ENCODE measurements at regions of chr15 and their contacts with region 1.

Region 1: DNA sequence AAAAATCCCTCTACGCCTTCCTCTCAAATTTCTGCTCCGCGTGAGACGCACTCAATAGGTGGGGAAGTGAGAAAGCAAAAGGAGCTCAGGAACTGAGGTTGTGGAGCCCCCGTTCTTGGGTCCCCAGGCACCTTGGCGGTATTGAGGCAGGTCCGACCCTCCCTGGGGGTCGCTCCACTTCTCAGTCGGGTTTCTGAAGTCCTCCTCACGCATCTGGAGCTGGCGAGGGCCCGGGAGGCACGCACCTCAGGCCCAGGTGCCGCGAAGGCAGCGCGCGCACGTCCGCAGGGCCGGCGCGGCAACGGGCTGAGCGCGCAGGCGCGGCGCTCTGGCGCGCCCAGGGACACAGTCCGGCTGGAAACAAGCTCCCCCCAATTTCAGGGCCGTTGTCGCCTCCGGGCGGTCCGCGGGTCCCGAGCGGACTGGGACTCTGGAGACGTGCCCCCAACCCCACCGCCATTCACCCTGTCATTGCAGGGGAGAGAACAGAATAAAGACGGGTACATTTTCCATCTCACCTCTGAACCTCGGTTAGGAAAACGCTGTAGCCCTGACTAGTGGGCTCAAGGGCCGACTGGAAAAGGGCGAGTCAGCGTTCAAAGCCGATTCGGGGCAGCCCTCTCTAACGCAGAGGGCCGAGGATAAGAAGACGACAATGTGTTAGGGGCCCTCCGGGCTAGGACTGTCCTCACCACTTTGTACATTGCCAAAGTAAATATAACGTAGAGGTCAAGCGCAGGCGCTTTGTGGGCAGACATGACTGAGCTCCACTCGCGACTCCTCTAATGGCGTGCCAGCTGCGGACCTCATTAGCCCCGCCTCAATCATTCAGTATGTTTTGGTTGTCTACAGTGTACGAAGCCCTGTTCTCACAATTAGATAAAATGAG is at the start of gene ZNF770:
- DNase-seq: peak; percentile 84
- H3K4me3 Mint-ChIP-seq: peak within 1 kb of the TSS; percentile 97
- H3K27ac Mint-ChIP-seq: peak within 1 kb of the TSS; percentile 99
- H3K4me1 Mint-ChIP-seq: peaks cover 28% of the 10 kb centered on the region
- H3K27me3 Mint-ChIP-seq: no peaks in the 10 kb centered on the region
- total RNA-seq, gene ZNF770: 36.4 to 39.4 TPM

Region 2: DNA sequence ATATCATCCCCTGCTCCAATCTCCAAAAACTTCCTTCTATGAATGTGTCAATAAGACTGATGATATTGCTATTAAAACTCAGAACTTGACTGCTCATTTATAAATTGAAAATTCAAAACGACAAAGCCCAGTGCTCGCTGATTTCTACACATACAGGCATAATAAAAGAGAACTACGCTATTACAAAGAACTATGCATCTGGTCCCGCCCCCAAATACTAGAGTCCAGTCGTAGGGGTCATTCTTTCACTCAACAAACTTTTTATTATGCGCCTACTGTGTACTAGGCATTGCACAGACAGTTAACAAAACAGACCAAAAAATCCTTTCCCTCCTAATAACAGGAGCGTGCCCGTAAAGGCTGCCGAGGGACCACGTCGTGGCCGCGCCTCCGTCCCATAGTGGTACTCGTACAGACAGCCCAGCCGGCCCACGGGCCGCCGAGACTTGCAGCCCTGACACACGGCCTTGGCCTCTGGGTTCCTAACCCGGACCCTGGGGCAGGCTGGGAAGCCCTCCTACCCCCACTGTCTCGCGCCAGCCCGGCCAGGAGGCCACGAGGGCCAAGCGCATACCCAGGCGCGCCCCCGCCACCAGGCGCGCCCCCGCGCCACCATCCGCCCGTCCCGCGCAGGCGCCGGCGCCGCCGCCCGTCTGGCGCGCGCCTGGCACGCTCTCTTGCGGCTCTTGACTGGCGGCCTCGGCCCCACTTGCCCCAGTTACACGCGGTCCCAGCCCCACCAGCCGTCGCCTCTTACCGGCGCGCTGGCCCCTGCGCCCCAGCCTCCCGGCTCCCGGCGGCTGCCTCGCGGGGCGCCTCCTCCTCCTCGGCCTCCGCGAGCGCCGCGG is 950.0 kb before region 1 on chr15:
- CTCF ChIA-PET with region 1: no interaction called
- intact Hi-C with region 1: loop called (anchors 1 kb)
- DNase-seq: peak; percentile 70
- H3K4me3 Mint-ChIP-seq: peak overlapping the region; percentile 92
- H3K27ac Mint-ChIP-seq: peak overlapping the region; percentile 92
- H3K4me1 Mint-ChIP-seq: peaks cover 17% of the 10 kb centered on the region
- H3K27me3 Mint-ChIP-seq: no peaks in the 10 kb centered on the region

Region 3: GRCh38 chr15:34223904-34224596 is 764.2 kb before region 1 on chr15:
- CTCF ChIA-PET with region 1: no interaction called
- intact Hi-C with region 1: loop called (anchors 5 kb)
- DNase-seq: no peak
- H3K4me3 Mint-ChIP-seq: peak overlapping the region; percentile 96
- H3K27ac Mint-ChIP-seq: peak overlapping the region; percentile 97
- H3K4me1 Mint-ChIP-seq: peaks cover 31% of the 10 kb centered on the region
- H3K27me3 Mint-ChIP-seq: no peaks in the 10 kb centered on the region

Region 4: DNA sequence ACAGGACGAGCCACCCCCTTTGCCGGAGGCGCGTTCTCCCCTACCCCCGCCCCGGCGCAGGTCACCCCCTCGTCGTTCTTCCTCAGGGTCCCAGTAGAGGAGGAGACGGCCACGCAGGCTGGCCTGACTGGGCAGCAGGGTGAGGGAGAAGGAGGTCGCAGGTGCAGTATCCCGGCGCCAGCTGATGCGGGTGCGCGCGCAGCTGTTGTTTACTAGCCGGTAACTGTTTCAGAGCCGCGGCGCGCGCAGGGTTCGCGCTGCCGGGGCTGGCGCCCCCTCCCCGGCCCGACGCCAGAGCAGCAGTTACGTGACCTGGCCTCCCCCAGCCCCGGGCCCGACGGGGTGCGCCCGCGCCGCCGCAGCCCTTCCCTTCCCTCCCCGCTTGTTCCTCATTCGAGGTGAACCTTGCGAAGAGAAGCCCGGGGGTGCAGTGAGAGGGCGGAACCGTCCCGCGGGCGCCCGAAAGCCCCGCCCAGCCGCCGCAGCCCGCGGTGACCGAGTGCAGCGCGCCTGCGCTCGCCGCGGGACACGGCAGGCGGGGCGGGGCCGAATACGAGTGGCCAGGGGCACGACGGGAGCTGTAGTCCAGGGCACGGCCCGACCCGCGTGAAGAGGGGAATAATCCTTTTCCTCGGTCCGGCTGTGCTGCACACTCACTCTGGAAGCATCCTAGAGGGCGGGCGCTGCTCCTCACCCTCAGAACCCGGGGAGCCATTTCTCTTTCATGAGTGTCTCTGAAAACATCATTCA is 650.5 kb before region 1 on chr15 and contains the start of gene SLC12A6:
- CTCF ChIA-PET with region 1: no interaction called
- intact Hi-C with region 1: loop called (anchors 2 kb)
- DNase-seq: peak; percentile 91
- H3K4me3 Mint-ChIP-seq: peak within 1 kb of the TSS; percentile 95
- H3K27ac Mint-ChIP-seq: peak within 1 kb of the TSS; percentile 97
- H3K4me1 Mint-ChIP-seq: peaks cover 53% of the 10 kb centered on the region
- H3K27me3 Mint-ChIP-seq: no peaks in the 10 kb centered on the region
- total RNA-seq, gene SLC12A6: 24.6 to 28.7 TPM

Region 5: DNA sequence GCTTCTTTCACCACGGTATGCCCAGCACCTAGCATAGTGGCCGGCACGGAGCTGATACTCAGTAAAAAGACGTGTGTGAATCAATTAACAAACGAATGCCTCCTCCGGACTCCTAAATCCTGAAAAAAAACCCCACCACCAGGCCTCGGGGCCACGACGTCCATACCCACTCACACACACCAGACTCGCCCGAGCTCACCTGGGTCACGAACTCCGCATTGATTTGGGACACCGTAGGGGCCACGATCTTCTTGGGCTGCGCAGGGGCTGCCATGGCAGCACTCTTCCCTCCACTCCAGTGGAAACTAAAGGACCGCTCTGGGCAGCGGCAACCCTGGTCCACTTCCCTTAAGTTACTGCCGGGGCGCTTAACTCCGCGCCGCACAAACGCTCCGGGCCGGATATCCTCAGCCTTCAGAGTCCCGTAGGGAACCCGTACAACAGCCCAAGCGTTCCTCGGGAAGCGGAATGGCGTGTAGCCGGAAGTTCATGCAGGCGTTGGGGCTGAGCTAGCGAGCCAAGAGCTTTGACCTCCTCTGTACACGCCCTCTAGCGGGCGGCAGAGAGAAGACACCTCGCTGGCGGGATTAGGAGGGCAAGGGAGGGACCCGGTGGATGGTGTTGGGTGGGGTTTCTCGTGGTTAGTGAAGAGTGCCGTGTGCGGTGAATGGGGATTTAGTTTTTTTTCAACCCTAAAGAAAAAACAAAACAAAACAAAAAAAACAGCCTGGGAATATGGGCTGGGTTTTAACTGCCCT is 18.7 kb before region 1 on chr15 and contains the start of gene AQR:
- CTCF ChIA-PET with region 1: interaction called, 35 read pairs
- intact Hi-C with region 1: loop called (anchors 1 kb)
- DNase-seq: peak; percentile 97
- H3K4me3 Mint-ChIP-seq: peak within 1 kb of the TSS; percentile 99
- H3K27ac Mint-ChIP-seq: peak within 1 kb of the TSS; percentile 93
- H3K4me1 Mint-ChIP-seq: peaks cover 40% of the 10 kb centered on the region
- H3K27me3 Mint-ChIP-seq: no peaks in the 10 kb centered on the region
- total RNA-seq, gene AQR: 30.8 to 31.3 TPM

Region 6: GRCh38 chr15:35271371-35272043 is 283.3 kb after region 1 on chr15:
- CTCF ChIA-PET with region 1: no interaction called
- intact Hi-C with region 1: no loop called
- DNase-seq: no peak
- H3K4me3 Mint-ChIP-seq: no peak overlapping the region
- H3K27ac Mint-ChIP-seq: no peak overlapping the region
- H3K4me1 Mint-ChIP-seq: no peaks in the 10 kb centered on the region
- H3K27me3 Mint-ChIP-seq: no peaks in the 10 kb centered on the region

Region 7: GRCh38 chr15:35362195-35362829 is 374.1 kb after region 1 on chr15:
- CTCF ChIA-PET with region 1: no interaction called
- intact Hi-C with region 1: no loop called
- DNase-seq: no peak
- H3K4me3 Mint-ChIP-seq: no peak overlapping the region
- H3K27ac Mint-ChIP-seq: no peak overlapping the region
- H3K4me1 Mint-ChIP-seq: no peaks in the 10 kb centered on the region
- H3K27me3 Mint-ChIP-seq: no peaks in the 10 kb centered on the region

Region 8: DNA sequence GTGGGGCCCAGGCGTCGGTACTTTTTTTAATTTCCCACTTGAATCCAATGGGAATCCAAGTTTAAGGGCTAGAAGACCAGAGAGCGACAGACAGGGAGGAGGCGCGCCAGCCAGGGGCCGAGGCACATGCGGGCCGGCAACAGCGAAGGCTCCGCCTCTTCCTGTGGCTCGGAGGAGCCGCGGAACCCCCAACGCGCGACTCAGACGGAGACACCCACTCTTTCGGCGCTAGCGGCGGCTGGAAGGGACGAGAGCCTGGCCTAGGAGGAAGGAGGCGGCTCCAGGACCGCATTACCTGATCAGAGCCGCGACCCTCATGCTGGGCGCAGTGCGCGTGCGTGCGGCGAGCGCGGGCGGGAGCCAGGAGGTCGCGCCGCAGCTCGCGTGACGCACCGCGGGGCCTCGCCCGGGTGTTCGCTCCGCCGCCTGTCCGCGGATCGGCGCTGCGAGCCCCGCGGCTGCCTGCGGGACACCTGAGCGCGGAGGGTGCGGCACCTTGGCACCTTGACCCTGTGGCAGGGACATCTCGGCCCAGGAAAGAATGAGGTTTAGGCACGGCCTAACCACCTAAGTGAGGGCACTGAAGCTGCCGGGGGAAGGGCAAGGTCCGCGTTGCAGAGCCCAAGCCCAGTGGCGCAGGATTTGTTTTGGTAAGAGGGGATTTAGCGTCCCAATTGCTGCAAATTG is 557.7 kb after region 1 on chr15 and contains the start of gene DPH6:
- CTCF ChIA-PET with region 1: no interaction called
- intact Hi-C with region 1: loop called (anchors 5 kb)
- DNase-seq: peak; percentile 77
- H3K4me3 Mint-ChIP-seq: peak within 1 kb of the TSS; percentile 98
- H3K27ac Mint-ChIP-seq: peak within 1 kb of the TSS; percentile 97
- H3K4me1 Mint-ChIP-seq: peaks cover 28% of the 10 kb centered on the region
- H3K27me3 Mint-ChIP-seq: no peaks in the 10 kb centered on the region
- total RNA-seq, gene DPH6: 20.0 to 20.5 TPM

Region 9: DNA sequence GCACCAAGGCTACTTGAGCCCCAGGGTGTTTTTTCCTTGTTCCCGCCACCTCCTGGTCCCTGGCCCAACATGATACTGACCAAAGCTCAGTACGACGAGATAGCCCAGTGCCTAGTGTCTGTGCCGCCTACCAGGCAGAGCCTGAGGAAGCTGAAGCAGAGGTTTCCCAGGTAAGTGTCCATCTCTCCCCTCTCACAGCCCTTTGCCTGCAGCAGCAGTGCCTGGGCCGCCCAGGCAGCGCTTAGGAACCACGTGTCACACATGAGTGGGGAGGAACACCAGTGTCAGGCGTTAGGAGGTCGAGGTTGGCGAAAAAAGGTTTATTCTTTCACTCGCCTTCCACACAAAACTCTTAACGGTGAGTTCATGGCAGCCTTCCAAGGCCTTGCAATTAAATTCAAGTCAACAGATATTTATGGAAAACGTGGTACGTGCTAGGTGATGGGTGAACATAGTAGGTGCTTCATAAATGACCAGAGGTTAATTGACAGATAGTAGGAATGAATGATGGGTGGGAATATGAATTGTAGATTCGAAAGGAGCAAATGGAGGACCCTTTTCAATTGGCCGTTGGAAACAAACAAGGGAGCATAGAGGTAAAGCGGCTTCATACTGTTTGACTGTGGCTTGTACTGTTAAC is 1591.7 kb after region 1 on chr15:
- CTCF ChIA-PET with region 1: no interaction called
- intact Hi-C with region 1: loop called (anchors 10 kb)
- DNase-seq: peak; percentile 36
- H3K4me3 Mint-ChIP-seq: peak overlapping the region; percentile 79
- H3K27ac Mint-ChIP-seq: peak overlapping the region; percentile 79
- H3K4me1 Mint-ChIP-seq: peaks cover 25% of the 10 kb centered on the region
- H3K27me3 Mint-ChIP-seq: no peaks in the 10 kb centered on the region